OCI-LY7 (cell line): ENCODE measurements at regions of chr22 and their contacts with region 1.

Region 1: DNA sequence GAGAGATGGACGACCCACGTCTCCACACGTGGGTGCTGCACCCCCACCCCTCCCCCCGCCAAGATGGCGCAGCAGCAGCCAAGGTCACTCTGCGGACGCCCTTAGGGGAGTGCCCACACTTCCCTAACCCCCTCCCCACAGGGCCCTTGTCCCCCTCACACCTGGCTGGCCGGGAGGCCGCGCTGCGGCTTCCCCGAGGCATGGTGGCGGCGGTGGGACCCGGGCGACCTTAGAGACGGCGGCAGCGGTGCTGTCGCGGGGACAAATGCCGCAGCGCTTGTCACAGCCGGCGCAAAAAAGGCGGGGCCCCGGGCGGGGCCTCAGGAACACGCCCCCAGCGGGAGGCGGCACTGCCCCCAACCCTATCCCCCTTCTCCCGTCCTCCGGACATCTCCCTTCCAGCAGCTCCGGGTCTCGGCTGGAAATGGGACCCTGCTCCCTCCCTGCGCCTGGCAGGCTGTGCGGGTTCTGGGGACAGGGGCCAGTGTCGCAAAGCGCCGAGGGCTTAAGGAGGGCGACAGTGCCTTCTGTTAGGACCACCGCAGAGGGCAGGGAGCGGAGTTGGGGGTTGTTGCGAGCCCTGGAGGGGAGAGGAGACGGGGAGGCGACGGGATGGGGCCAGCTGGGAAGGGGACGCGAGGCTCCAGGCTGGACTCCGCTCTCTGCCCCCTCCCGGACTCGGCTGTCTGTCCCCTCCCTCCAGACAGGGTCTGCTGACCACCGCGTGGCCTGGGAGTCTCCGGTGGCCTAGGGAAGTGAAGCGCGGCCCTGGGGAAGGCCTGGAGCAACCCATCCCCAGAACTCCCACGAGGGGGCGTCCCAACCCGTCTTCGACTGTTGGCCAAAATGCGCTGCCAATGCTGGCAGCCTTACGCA is at the start of gene CHCHD10:
- DNase-seq: peak; percentile 89
- H3K4me3 ChIP-seq: peak within 1 kb of the TSS; percentile 99
- H3K27ac ChIP-seq: peak within 1 kb of the TSS; percentile 74
- H3K4me1 ChIP-seq: peaks cover 80% of the 10 kb centered on the region
- CTCF ChIP-seq: peak; percentile 86
- total RNA-seq, gene CHCHD10: 50.8 and 54.6 TPM in 2 replicates

Region 2: GRCh38 chr22:23539135-23539838 is 228.6 kb before region 1 on chr22:
- CTCF ChIA-PET with region 1: no interaction called
- POLR2A ChIA-PET with region 1: no interaction called
- intact Hi-C with region 1: loop called (anchors 5 kb)
- DNase-seq: peak; percentile 92
- H3K4me3 ChIP-seq: no peak overlapping the region
- H3K27ac ChIP-seq: no peak overlapping the region
- H3K4me1 ChIP-seq: peaks cover 29% of the 10 kb centered on the region
- CTCF ChIP-seq: peak; percentile 84

Region 3: GRCh38 chr22:23750714-23751440 is 17.0 kb before region 1 on chr22 and contains the start of gene ZNF70:
- CTCF ChIA-PET with region 1: no interaction called
- POLR2A ChIA-PET with region 1: interaction called, 3 read pairs
- intact Hi-C with region 1: loop called (anchors 1 kb)
- DNase-seq: peak; percentile 94
- H3K4me3 ChIP-seq: peak within 1 kb of the TSS; percentile 78
- H3K27ac ChIP-seq: peak within 1 kb of the TSS; percentile 95
- H3K4me1 ChIP-seq: peaks cover 40% of the 10 kb centered on the region
- CTCF ChIP-seq: peak; percentile 50
- total RNA-seq, gene ZNF70: 5.1 and 6.0 TPM in 2 replicates

Region 4: DNA sequence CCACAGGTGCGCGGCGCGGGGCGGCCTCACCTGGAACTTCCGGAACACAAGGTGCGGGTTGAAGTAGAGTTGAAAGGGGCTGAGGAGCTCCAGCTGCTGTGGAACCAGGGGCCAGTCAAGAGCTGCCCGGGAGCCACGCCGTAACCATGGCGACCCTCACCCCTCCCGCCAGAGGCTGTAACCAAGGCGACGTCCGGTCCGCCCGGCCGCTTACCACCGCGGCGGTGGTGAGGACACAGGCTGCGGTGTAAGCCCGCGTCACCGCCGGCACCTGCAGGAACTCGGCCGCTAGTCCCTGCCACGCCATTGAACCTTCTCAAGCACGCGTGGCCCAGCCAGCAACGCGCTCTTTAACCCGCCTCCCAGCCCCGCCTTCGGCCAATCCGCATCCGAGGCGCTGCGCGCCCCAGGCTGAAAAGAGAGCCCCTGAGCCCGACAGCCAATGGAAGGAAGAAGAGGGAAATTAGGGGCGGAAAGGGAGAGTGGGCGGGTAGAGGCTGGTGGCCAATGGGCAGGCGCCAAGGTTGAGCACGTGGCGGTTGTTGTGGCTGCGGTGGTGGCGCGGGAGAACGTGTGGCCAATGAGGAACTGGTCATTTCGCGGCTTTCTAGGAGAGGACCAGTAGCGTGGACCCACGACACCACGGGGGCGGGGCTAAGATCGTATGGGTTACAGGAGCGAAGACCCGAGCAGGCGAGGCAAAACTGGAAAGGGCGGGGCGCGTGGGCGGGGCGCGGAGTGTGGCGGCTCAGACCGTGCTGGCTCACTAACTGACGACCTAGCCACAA is 71.0 kb after region 1 on chr22 and contains the start of gene DERL3:
- CTCF ChIA-PET with region 1: no interaction called
- POLR2A ChIA-PET with region 1: interaction called, 8 read pairs
- intact Hi-C with region 1: loop called (anchors 2 kb)
- DNase-seq: peak; percentile 100
- H3K4me3 ChIP-seq: peak within 1 kb of the TSS; percentile 69
- H3K27ac ChIP-seq: peak within 1 kb of the TSS; percentile 83
- H3K4me1 ChIP-seq: peaks cover 60% of the 10 kb centered on the region
- CTCF ChIP-seq: no peak
- total RNA-seq, gene DERL3: 34.6 and 44.6 TPM in 2 replicates

Region 5: GRCh38 chr22:23913661-23914353 is 145.9 kb after region 1 on chr22:
- CTCF ChIA-PET with region 1: no interaction called
- POLR2A ChIA-PET with region 1: no interaction called
- intact Hi-C with region 1: loop called (anchors 5 kb)
- DNase-seq: peak; percentile 99
- H3K4me3 ChIP-seq: peak overlapping the region; percentile 74
- H3K27ac ChIP-seq: peak overlapping the region; percentile 85
- H3K4me1 ChIP-seq: peaks cover 63% of the 10 kb centered on the region
- CTCF ChIP-seq: no peak

Region 6: DNA sequence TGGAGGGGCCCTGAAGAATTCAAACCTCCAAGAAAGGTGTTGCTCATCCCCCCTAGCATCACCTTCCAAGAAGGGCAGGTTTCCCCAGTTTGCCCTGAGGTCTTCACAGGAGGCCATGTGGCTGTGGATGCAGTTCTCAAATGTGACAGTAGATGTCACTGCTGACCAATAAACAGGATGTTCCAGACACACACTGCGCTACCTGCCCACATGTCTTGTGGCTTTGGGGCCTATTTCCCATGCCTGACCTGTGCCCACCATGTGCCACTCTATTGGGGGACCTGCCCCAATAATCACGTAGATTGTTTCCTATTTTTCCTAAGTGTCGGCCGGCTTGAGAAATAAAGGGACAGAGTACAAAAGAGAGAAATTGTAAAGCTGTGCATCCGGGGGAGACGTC is 216.5 kb after region 1 on chr22:
- CTCF ChIA-PET with region 1: no interaction called
- POLR2A ChIA-PET with region 1: no interaction called
- intact Hi-C with region 1: no loop called
- DNase-seq: peak; percentile 64
- H3K4me3 ChIP-seq: no peak overlapping the region
- H3K27ac ChIP-seq: no peak overlapping the region
- H3K4me1 ChIP-seq: no peaks in the 10 kb centered on the region
- CTCF ChIP-seq: peak; percentile 70

Region 7: DNA sequence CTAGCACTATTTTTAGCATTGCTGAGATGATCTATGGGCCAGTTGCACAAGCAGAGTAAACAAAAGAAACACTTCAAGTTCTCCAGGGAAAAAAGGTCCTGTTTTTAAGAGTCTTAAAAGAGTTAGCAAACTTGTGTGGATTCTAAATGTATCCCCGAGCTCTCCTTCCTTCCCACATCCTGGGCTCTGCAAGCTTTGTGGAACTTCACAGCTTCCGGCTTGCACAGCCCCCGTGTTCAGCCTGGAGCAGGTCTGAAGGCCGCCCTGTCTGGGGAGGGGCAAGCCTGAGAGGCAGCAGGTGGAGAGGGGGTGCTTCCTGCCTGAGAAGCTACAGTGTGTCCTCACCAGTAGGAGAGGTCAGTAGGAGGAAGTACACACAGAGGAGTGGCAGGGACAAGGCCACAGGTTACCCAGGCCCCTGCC is 378.3 kb after region 1 on chr22:
- CTCF ChIA-PET with region 1: no interaction called
- POLR2A ChIA-PET with region 1: no interaction called
- intact Hi-C with region 1: no loop called
- DNase-seq: peak; percentile 83
- H3K4me3 ChIP-seq: peak overlapping the region; percentile 23
- H3K27ac ChIP-seq: peak overlapping the region; percentile 61
- H3K4me1 ChIP-seq: peaks cover 30% of the 10 kb centered on the region
- CTCF ChIP-seq: no peak